ENCODE measurements at regions of chr19 and their contacts with region 1.

Region 1: DNA sequence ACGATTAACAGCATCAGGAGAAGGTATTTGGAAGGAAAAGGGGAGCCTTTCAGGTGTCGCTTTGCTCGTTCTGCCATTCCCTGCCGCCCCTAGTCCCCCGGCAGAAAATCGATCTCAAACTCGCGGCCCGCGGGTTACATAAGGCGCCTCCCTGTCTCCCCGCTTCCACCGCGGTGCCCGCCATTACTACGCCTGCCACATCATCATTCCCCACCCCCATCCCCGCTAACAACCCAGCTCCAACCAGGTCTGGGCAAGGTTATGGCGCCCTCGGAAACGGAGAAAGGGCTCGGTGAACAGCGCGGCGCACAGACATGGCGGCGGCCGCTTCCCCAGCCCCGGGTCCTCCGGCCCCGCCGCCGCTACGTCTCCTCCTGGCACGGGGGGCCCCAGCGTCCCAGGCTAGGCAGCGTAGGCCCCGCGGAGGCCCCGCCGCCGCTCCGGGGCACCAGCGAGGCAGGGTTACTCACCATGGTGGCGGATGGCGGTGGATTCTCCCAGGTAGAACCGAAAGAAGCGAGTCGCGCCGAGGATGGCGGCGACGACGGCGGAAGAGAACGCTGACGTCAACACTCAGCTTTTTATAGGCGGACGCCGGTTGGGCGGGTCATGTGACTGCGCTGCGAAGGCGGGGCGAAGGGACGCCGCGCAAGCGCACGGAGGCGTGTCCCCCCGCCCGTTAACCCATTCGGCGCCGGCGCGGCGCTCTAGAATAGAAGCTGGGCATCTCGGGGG is at the start of gene EEF2:
- DNase-seq: peak; percentile 91 to 95 (median 94)
- H3K4me3 ChIP-seq: peak within 1 kb of the TSS; percentile 67 to 93
- H3K4me3 Mint-ChIP-seq: peak within 1 kb of the TSS; percentile 96 to 98 (median 97)
- H3K27ac ChIP-seq: peak within 1 kb of the TSS; percentile 91
- H3K27ac Mint-ChIP-seq: peak within 1 kb of the TSS; percentile 94 to 99 (median 97)
- H3K4me1 ChIP-seq: peaks cover 55% of the 10 kb centered on the region
- H3K4me1 Mint-ChIP-seq: peaks cover 20 to 61% (median 41%) of the 10 kb centered on the region in 4 donors
- H3K27me3 ChIP-seq: no peaks in the 10 kb centered on the region
- H3K27me3 Mint-ChIP-seq: no peaks in the 10 kb centered on the region
- total RNA-seq, gene EEF2: 2,286 to 2,389 TPM

Region 2: DNA sequence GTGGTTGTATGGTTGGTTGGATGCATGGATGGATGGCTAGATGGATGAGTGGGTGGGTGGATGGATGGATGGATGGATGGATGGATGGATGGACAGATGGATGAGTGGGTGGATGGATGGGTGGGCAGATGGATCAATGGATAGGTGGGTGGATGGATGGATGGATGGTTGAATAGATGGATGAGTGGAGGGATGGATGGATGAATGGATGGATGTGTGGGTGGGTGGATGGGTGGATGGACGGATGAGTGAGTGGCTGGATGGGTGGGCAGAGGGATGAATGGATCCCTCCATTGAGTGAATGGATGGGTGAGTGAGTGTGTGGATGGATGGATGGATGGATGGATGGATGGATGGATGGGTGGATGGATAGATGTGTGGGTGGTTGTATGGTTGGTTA is 61.2 kb before region 1 on chr19:
- CTCF ChIA-PET with region 1: no interaction called
- POLR2A ChIA-PET with region 1: no interaction called
- intact Hi-C with region 1: no loop called
- DNase-seq: no peak
- H3K4me3 ChIP-seq: no peak overlapping the region
- H3K4me3 Mint-ChIP-seq: no peak overlapping the region
- H3K27ac ChIP-seq: no peak overlapping the region
- H3K27ac Mint-ChIP-seq: peak overlapping the region in 1 of 7 donors; percentile 28
- H3K4me1 ChIP-seq: no peaks in the 10 kb centered on the region
- H3K4me1 Mint-ChIP-seq: no peaks in the 10 kb centered on the region
- H3K27me3 ChIP-seq: no peaks in the 10 kb centered on the region
- H3K27me3 Mint-ChIP-seq: peaks cover 3% of the 10 kb centered on the region in 2 donors

Region 3: DNA sequence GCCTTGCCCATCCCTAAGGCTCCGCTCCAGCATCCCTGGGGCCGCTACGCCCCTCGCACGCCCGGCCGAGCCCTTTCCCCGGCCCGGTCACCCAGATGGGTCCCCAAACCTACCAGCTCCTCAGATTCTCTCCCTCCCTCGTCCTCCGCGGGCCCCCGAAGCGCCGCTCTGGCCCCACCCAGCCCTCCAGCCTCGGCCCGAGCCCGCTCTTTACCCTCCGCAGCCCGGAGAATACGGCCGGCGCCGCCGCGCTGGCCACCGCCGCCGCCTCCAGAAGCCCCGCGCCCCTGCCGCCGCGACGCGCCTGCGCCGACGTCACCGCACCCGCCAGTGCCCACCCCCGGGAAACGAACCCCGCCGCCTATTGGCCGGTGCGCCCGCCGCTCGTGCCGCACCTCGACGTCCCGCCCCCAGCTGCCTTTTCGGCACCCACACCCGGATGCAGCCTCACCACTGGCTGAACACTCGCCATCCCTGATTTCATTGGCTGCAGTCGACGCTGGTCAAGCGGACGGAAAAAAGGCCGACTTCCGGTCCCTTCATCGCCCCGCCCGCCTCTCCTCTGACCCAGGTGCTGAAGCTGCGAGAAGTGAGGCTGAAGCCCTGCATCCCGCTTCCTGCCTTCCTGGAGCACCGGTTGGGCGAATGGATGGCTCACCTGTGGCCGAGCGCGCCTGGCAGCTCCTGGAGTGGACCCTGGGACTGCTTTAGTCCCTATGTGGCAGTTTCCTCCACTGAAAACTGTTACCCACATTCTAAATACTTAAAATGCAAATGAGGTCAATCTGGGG is 14.1 kb before region 1 on chr19 and contains the start of gene DAPK3:
- CTCF ChIA-PET with region 1: interaction called, 16 read pairs
- POLR2A ChIA-PET with region 1: interaction called, 106 read pairs
- intact Hi-C with region 1: loop called (anchors 1 kb)
- DNase-seq: peak; percentile 85 to 87 (median 85)
- H3K4me3 ChIP-seq: peak within 1 kb of the TSS; percentile 74 to 78
- H3K4me3 Mint-ChIP-seq: peak within 1 kb of the TSS; percentile 87 to 92 (median 91)
- H3K27ac ChIP-seq: peak within 1 kb of the TSS; percentile 86
- H3K27ac Mint-ChIP-seq: peak within 1 kb of the TSS; percentile 90 to 94 (median 92)
- H3K4me1 ChIP-seq: peaks cover 25% of the 10 kb centered on the region
- H3K4me1 Mint-ChIP-seq: peaks cover 11 to 34% (median 25%) of the 10 kb centered on the region in 4 donors
- H3K27me3 ChIP-seq: no peaks in the 10 kb centered on the region
- H3K27me3 Mint-ChIP-seq: no peaks in the 10 kb centered on the region
- total RNA-seq, gene DAPK3: 40.0 to 40.7 TPM

Region 4: GRCh38 chr19:4108767-4109625 is 123.9 kb after region 1 on chr19:
- CTCF ChIA-PET with region 1: interaction called, 6 read pairs
- POLR2A ChIA-PET with region 1: interaction called, 15 read pairs
- intact Hi-C with region 1: loop called (anchors 2 kb)
- DNase-seq: peak; percentile 73 to 87 (median 77)
- H3K4me3 ChIP-seq: no peak overlapping the region
- H3K4me3 Mint-ChIP-seq: peak overlapping the region; percentile 45 to 81 (median 68)
- H3K27ac ChIP-seq: peak overlapping the region; percentile 60
- H3K27ac Mint-ChIP-seq: peak overlapping the region; percentile 87 to 97 (median 95)
- H3K4me1 ChIP-seq: peaks cover 56% of the 10 kb centered on the region
- H3K4me1 Mint-ChIP-seq: peaks cover 19 to 72% (median 40%) of the 10 kb centered on the region in 4 donors
- H3K27me3 ChIP-seq: no peaks in the 10 kb centered on the region
- H3K27me3 Mint-ChIP-seq: no peaks in the 10 kb centered on the region

Region 5: GRCh38 chr19:4139614-4140236 is 154.7 kb after region 1 on chr19:
- CTCF ChIA-PET with region 1: interaction called, 26 read pairs
- POLR2A ChIA-PET with region 1: interaction called, 20 read pairs
- intact Hi-C with region 1: loop called (anchors 1 kb)
- DNase-seq: peak; percentile 74 to 80 (median 78)
- H3K4me3 ChIP-seq: no peak overlapping the region
- H3K4me3 Mint-ChIP-seq: peak overlapping the region; percentile 7 to 81 (median 60)
- H3K27ac ChIP-seq: no peak overlapping the region
- H3K27ac Mint-ChIP-seq: peak overlapping the region in 3 of 7 donors; percentile 16 to 59 (median 35)
- H3K4me1 ChIP-seq: peaks cover 9% of the 10 kb centered on the region
- H3K4me1 Mint-ChIP-seq: peaks cover 6 to 13% (median 10%) of the 10 kb centered on the region in 4 donors
- H3K27me3 ChIP-seq: no peaks in the 10 kb centered on the region
- H3K27me3 Mint-ChIP-seq: peaks cover 5 to 6% of the 10 kb centered on the region in 2 donors

Region 6: GRCh38 chr19:4199699-4200293 is 214.7 kb after region 1 on chr19:
- CTCF ChIA-PET with region 1: interaction called, 16 read pairs
- POLR2A ChIA-PET with region 1: interaction called, 4 read pairs
- intact Hi-C with region 1: loop called (anchors 1 kb)
- DNase-seq: no peak
- H3K4me3 ChIP-seq: no peak overlapping the region
- H3K4me3 Mint-ChIP-seq: no peak overlapping the region
- H3K27ac ChIP-seq: no peak overlapping the region
- H3K27ac Mint-ChIP-seq: no peak overlapping the region
- H3K4me1 ChIP-seq: no peaks in the 10 kb centered on the region
- H3K4me1 Mint-ChIP-seq: peaks cover 12 to 16% (median 13%) of the 10 kb centered on the region in 4 donors
- H3K27me3 ChIP-seq: peaks cover 18% of the 10 kb centered on the region
- H3K27me3 Mint-ChIP-seq: peaks cover 12 to 33% of the 10 kb centered on the region in 2 donors

Measured in CD4-positive, alpha-beta memory T cell (primary cell).